Adrenal gland (tissue), 19 donors: ENCODE measurements at regions of chr9 and their contacts with region 1.

Region 1: DNA sequence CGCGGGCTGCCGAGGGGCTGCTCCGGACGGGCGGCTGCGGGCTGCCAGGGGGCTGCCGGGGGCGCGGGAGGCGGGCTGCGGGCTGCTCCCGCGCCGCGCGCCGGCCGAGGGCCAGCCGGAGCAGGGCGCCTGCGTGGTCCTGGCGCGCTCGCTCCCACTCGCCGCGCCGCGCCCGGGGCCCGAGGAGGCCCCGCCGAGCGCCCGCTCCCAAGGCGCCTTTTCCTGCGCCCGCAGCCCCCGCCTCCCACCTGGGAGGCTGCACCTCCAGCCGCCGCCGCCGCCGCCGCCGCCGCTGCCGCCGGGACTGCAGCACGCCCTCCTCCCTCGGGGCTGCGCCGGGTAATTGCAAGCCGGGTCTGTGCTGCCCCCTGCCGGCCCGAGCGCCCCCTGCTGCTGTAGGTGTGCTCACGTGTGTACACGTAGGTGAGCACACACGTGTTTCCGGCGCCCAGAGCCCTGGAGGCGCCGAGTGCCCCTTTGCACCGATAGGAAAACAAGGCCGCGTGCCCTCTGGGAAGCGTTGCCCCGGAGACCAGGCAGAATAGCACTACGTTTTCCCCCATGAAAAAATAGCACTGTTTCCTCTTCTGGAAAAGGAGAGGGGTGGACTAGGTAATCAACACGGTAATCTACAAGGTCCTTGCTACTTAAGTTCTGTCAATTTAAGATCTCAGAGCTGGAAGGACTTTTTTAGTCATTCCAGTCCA is at the start of gene EPB41L4B:
- DNase-seq: peak; percentile 85 to 96 (median 92)
- H3K4me3 ChIP-seq: peak within 1 kb of the TSS in 2 of 4 donors; percentile 22 to 69
- H3K27ac ChIP-seq: peak within 1 kb of the TSS in 2 of 5 donors; percentile 40 to 49
- H3K4me1 ChIP-seq: peaks cover 0 to 34% of the 10 kb centered on the region in 2 donors
- H3K27me3 ChIP-seq: no peaks in the 10 kb centered on the region
- CTCF ChIP-seq: peak; percentile 81 to 99 (median 94)
- POLR2A ChIP-seq: peak; percentile 20 to 34
- total RNA-seq, gene EPB41L4B: 13.4 to 27.3 (median 20.4) TPM

Region 2: GRCh38 chr9:108727580-108728111 is 593.2 kb before region 1 on chr9:
- intact Hi-C with region 1: no loop called
- DNase-seq: peak in 4 of 7 donors; percentile 10 to 34 (median 22)
- H3K4me3 ChIP-seq: no peak overlapping the region
- H3K27ac ChIP-seq: no peak overlapping the region
- H3K4me1 ChIP-seq: no peaks in the 10 kb centered on the region
- H3K27me3 ChIP-seq: no peaks in the 10 kb centered on the region
- CTCF ChIP-seq: no peak
- POLR2A ChIP-seq: no peak

Region 3: DNA sequence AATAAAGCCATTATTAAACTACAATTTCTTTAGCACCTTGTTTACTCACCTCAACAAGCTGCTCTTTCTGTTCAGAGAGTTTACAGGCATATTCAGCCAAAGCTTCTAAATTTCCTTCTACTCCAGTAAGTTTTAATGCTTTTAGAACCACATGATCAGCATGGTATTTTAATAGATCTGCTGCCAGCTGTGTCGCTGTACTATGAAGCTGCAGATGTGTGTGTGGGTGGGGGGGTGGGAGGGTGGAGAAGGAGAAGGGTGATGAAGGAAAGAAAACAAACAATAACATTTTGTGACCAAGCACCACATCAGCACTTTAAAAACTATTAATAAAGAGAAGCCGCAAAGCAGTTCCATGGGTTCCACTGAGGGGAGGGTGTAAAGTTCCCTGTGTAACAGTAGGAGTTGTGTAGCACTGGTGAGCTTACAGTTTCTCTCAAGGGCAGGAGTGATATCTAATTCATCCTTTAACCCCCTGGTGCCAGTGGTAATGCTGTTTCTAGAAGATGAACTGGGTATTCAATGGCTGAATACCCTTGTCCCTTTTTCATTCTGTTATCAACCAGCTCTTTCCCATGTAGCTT is 348.2 kb before region 1 on chr9:
- intact Hi-C with region 1: no loop called
- DNase-seq: no peak
- H3K4me3 ChIP-seq: no peak overlapping the region
- H3K27ac ChIP-seq: peak overlapping the region in 3 of 5 donors; percentile 48 to 69 (median 61)
- H3K4me1 ChIP-seq: peaks cover 26 to 41% of the 10 kb centered on the region in 2 donors
- H3K27me3 ChIP-seq: no peaks in the 10 kb centered on the region
- CTCF ChIP-seq: no peak
- POLR2A ChIP-seq: no peak

Region 4: DNA sequence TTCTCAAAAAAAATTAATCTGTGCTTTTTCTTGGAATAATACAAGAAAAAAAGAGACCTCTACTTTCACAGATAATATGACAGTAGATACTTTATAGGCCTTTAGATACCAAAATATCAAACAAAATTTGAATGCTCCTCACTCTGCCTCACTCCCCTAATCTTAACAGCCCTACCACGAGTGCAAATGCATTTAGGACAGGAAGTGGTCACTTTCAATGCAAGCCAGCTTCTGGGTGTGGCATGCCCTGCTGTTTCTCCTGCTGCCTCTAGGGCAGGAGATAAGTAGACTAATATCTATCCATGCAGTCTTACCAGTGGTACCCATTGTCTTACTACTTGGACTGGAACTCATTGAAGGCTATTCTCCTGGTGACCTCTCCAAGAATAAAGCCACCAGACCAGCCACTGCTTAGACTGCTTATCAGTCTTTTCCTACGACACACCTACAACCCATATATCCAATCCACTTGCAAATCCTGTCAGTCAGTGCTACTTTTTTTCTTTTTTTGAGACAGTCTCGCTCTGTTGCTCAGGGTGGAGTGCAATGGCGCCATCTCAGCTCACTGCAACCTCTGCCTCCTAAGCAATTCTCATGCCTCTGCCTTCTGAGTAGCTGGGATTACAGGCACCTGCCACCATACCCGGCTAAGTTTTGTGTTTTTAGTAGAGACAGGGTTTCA is 176.9 kb before region 1 on chr9:
- intact Hi-C with region 1: no loop called
- DNase-seq: no peak
- H3K4me3 ChIP-seq: no peak overlapping the region
- H3K27ac ChIP-seq: no peak overlapping the region
- H3K4me1 ChIP-seq: no peaks in the 10 kb centered on the region
- H3K27me3 ChIP-seq: no peaks in the 10 kb centered on the region
- CTCF ChIP-seq: peak in 2 of 6 experiments; percentile 12 to 14
- POLR2A ChIP-seq: no peak

Region 5: GRCh38 chr9:109192732-109193361 is 128.0 kb before region 1 on chr9:
- intact Hi-C with region 1: loop called (anchors 5 to 10 kb)
- DNase-seq: peak; percentile 25 to 66 (median 42)
- H3K4me3 ChIP-seq: no peak overlapping the region
- H3K27ac ChIP-seq: no peak overlapping the region
- H3K4me1 ChIP-seq: no peaks in the 10 kb centered on the region
- H3K27me3 ChIP-seq: no peaks in the 10 kb centered on the region
- CTCF ChIP-seq: peak in 5 of 6 experiments; percentile 25 to 59 (median 51)
- POLR2A ChIP-seq: no peak

Region 6: DNA sequence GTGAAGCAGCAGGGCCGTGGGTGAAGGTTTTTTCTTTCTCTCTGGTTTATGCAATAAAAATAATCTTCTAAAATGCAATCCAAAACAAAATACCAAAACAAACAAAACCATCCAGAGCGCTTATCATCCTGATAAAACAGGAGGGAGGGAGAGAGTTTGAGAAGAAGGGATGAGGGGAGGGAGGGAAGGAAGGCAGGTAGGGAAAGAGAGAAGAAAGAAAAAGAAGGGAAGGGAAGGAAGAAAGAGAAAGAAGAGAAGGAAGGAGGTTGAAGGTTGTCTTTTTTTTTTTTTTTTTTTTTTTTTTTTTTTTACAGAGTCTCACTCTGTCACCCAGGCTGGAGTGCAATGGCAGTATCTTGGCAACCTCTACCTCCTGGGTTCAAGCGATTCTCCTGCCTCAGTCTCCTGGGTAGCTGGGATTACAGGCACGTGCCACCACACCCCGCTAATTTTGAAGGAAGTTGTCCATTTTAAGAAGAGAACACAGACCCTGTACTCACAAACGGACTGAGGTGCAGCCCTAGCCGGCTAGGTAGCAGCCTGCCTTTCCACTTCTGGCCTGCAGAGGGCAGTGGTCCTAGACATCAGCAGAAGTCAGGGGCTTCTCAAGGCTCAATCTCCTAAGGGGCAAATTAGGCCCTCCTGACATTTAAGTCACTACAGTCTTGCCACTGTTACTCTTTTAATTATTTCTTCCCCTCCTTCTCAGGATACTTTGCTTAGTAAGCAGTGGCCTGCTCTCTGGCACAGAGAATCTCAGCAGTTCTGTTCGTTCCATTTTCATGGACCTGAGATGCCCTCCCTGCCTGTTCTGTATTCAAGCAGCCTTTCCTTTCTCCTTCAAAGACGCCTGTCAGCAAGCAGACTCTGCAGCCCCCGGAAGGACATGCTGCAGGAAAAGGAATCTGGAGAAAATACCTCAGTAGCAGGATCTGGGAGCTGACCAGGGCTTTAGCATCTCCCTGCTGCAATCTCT is 76.5 kb before region 1 on chr9:
- intact Hi-C with region 1: loop called (anchors 5 to 10 kb)
- DNase-seq: peak; percentile 60 to 90 (median 75)
- H3K4me3 ChIP-seq: no peak overlapping the region
- H3K27ac ChIP-seq: no peak overlapping the region
- H3K4me1 ChIP-seq: peaks cover 0 to 6% of the 10 kb centered on the region in 2 donors
- H3K27me3 ChIP-seq: no peaks in the 10 kb centered on the region
- CTCF ChIP-seq: peak; percentile 75 to 94 (median 85)
- POLR2A ChIP-seq: no peak

Region 7: GRCh38 chr9:109507421-109507838 is 186.5 kb after region 1 on chr9:
- intact Hi-C with region 1: no loop called
- DNase-seq: peak in 6 of 7 donors; percentile 52 to 78 (median 67)
- H3K4me3 ChIP-seq: no peak overlapping the region
- H3K27ac ChIP-seq: no peak overlapping the region
- H3K4me1 ChIP-seq: peaks cover 0 to 4% of the 10 kb centered on the region in 2 donors
- H3K27me3 ChIP-seq: no peaks in the 10 kb centered on the region
- CTCF ChIP-seq: no peak
- POLR2A ChIP-seq: no peak